ENCODE measurements at regions of chr12 and their contacts with region 1.

Region 1: GRCh38 chr12:57832966-57833365 is 13.6 kb downstream of the CTDSP2 start:
- DNase-seq: no peak
- H3K4me3 ChIP-seq: no peak overlapping the region
- H3K27ac ChIP-seq: no peak overlapping the region
- H3K4me1 ChIP-seq: peaks cover 32% of the 10 kb centered on the region
- H3K27me3 ChIP-seq: no peaks in the 10 kb centered on the region
- CTCF ChIP-seq: no peak
- POLR2A ChIP-seq: no peak

Region 2: GRCh38 chr12:57782608-57783465 is 50.1 kb before region 1 on chr12 and contains the start of gene TSFM:
- intact Hi-C with region 1: loop called (anchors 5 kb)
- DNase-seq: peak; percentile 94
- H3K4me3 ChIP-seq: peak within 1 kb of the TSS; percentile 58 to 93
- H3K27ac ChIP-seq: peak within 1 kb of the TSS; percentile 28 to 71
- H3K4me1 ChIP-seq: no peaks in the 10 kb centered on the region
- H3K27me3 ChIP-seq: no peaks in the 10 kb centered on the region
- CTCF ChIP-seq: peak; percentile 95 to 98 (median 96)
- POLR2A ChIP-seq: no peak
- total RNA-seq, gene TSFM: 24.3 to 39.6 TPM

Region 3: DNA sequence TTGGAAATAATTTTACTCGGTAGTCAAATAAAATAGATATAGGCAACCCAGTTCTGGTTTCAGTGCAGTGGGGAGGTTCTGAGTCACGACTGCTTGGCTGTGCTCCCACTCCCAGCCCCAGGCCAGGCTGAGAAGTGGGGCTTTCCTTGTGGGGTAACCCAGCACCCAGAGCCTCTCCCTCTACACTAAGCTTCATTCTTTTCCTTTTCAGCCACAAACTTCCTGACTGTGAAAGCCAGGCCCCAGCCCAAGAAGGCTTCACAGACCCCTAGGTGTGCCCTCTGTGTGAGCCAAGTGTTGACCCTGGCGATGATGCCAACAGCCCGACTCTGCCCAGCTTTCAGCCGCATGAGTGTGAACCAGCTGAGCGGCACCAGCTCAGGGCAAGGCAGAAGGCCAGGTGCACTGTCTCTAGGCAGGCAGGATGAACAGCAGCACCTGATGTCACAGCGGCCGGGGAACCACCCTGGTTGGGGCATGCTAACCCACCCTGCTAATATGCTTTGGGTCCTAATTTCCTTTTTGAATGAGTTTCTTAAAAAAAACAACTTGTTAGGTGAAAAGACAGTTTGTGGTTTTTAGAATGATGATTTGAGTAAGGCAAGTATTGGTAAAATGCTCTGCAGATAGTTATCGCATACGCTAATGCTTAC is 66.2 kb after region 1 on chr12:
- intact Hi-C with region 1: loop called (anchors 2 kb)
- DNase-seq: peak; percentile 51
- H3K4me3 ChIP-seq: no peak overlapping the region
- H3K27ac ChIP-seq: peak overlapping the region; percentile 38 to 89
- H3K4me1 ChIP-seq: peaks cover 25% of the 10 kb centered on the region
- H3K27me3 ChIP-seq: no peaks in the 10 kb centered on the region
- CTCF ChIP-seq: no peak
- POLR2A ChIP-seq: no peak

Region 4: GRCh38 chr12:58465418-58465817 is 632.5 kb after region 1 on chr12:
- intact Hi-C with region 1: no loop called
- DNase-seq: no peak
- H3K4me3 ChIP-seq: no peak overlapping the region
- H3K27ac ChIP-seq: no peak overlapping the region
- H3K4me1 ChIP-seq: no peaks in the 10 kb centered on the region
- H3K27me3 ChIP-seq: no peaks in the 10 kb centered on the region
- CTCF ChIP-seq: no peak
- POLR2A ChIP-seq: no peak